Psoas muscle (tissue), 8 donors: ENCODE measurements at regions of chr22 and their contacts with region 1.

Region 1: GRCh38 chr22:17243524-17243923 is 24.3 kb upstream of the ADA2 start:
- DNase-seq: peak in 1 of 2 donors; percentile 17
- ATAC-seq: peak in 3 of 4 donors; percentile 59 to 66 (median 60)
- H3K4me3 ChIP-seq: no peak overlapping the region
- H3K27ac ChIP-seq: no peak overlapping the region
- H3K4me1 ChIP-seq: no peaks in the 10 kb centered on the region
- H3K27me3 ChIP-seq: peaks cover 0 to 2% (median 0%) of the 10 kb centered on the region in 3 donors
- CTCF ChIP-seq: no peak

Region 2: DNA sequence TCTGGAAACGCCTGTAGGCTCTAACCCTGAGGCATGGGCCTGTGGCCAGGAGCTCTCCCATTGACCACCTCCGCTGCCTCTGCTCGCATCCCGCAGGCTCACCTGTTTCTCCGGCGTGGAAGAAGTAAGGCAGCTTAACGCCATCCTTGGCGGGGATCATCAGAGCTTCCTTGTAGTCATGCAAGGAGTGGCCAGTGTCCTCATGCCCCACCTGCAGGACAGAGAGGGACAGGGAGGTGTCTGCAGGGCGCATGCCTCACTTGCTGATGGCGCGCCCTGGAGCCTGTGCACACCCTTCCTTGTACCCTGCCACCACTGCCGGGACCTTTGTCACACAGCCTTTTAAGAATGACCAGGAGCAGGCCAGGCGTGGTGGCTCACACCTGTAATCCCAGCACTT is 55.3 kb before region 1 on chr22:
- intact Hi-C with region 1: loop called in 1 of 2 experiments (anchors 10 kb)
- DNase-seq: no peak
- ATAC-seq: no peak
- H3K4me3 ChIP-seq: no peak overlapping the region
- H3K27ac ChIP-seq: no peak overlapping the region
- H3K4me1 ChIP-seq: no peaks in the 10 kb centered on the region
- H3K27me3 ChIP-seq: no peaks in the 10 kb centered on the region
- CTCF ChIP-seq: no peak